Heart left ventricle (tissue), 16 donors: ENCODE measurements at regions of chr11 and their contacts with region 1.

Region 1: GRCh38 chr11:68121067-68121899 is at the start of gene CHKA:
- DNase-seq: peak; percentile 94 to 97 (median 95)
- ATAC-seq: peak; percentile 85 to 97 (median 95)
- H3K4me3 ChIP-seq: peak within 1 kb of the TSS; percentile 38 to 87 (median 76)
- H3K27ac ChIP-seq: peak within 1 kb of the TSS; percentile 91 to 100 (median 99)
- H3K4me1 ChIP-seq: peaks cover 0 to 54% (median 39%) of the 10 kb centered on the region in 12 donors
- H3K27me3 ChIP-seq: no peaks in the 10 kb centered on the region
- CTCF ChIP-seq: peak in 2 of 12 donors; percentile 15 to 24
- POLR2A ChIP-seq: peak; percentile 65 to 83
- total RNA-seq, gene CHKA: 6.1 to 15.0 (median 8.2) TPM

Region 2: GRCh38 chr11:68030318-68031138 is 90.8 kb before region 1 on chr11 and contains the start of gene NDUFS8:
- intact Hi-C with region 1: loop called in 4 of 10 experiments (anchors 5 to 10 kb)
- DNase-seq: peak; percentile 95 to 98 (median 97)
- ATAC-seq: peak; percentile 90 to 96 (median 94)
- H3K4me3 ChIP-seq: peak within 1 kb of the TSS; percentile 63 to 94 (median 85)
- H3K27ac ChIP-seq: peak within 1 kb of the TSS; percentile 85 to 98 (median 93)
- H3K4me1 ChIP-seq: peaks cover 0 to 46% (median 30%) of the 10 kb centered on the region in 12 donors
- H3K27me3 ChIP-seq: no peaks in the 10 kb centered on the region
- CTCF ChIP-seq: no peak
- POLR2A ChIP-seq: peak in 1 of 2 donors; percentile 71
- total RNA-seq, gene NDUFS8: 262 to 948 (median 365) TPM

Region 3: DNA sequence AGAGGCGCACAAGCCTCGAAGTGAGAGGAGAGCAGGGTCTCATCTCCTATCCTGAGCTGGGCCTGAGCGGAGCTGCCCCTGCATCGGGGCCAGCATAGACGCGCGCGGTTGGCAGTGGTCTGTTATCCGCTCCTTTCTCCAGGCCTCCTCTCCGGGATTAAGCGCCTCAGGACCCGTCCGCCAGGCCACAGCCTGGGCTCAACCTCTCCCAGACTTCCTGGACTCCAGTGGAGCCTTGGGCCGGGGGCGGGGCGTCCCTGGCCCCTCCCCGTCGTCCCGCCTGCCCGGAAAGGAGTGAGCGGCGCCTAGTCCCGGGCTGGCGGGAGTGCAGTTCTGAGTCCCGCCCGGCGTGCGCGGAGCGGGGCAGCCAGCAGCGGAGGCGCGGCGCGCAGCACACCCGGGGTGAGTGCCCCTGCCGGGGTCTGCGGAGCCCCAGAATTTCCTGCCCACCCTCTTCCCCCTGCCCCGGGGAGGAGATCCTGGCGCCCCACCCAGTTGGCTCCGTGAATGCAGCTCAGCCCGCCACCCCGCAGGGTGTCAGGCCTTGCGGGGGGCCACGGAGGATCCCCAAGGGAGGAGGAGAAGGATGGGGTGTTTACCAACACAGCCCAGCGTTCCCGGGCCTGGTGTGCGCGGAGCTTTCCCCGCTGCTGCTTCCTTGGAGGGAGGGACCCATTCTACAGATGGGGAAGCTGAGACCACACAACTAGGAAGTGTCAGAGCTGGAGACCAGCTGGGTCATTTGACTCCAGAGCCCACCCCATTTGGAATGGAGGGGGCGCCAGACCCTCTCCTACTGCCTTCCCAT is 82.4 kb before region 1 on chr11 and contains the start of gene TCIRG1:
- intact Hi-C with region 1: loop called in 5 of 10 experiments (anchors 2 to 10 kb)
- DNase-seq: peak; percentile 88 to 94 (median 91)
- ATAC-seq: peak; percentile 67 to 88 (median 82)
- H3K4me3 ChIP-seq: peak within 1 kb of the TSS; percentile 52 to 95 (median 81)
- H3K27ac ChIP-seq: peak within 1 kb of the TSS; percentile 74 to 96 (median 90)
- H3K4me1 ChIP-seq: peaks cover 11 to 58% (median 41%) of the 10 kb centered on the region in 12 donors
- H3K27me3 ChIP-seq: no peaks in the 10 kb centered on the region
- CTCF ChIP-seq: no peak
- POLR2A ChIP-seq: peak; percentile 73 to 98
- total RNA-seq, gene TCIRG1: 10.2 to 88.7 (median 20.3) TPM

Region 4: GRCh38 chr11:68173926-68174325 is 52.6 kb after region 1 on chr11:
- intact Hi-C with region 1: loop called in 1 of 10 experiments (anchors 10 kb)
- DNase-seq: no peak
- ATAC-seq: no peak
- H3K4me3 ChIP-seq: no peak overlapping the region
- H3K27ac ChIP-seq: no peak overlapping the region
- H3K4me1 ChIP-seq: no peaks in the 10 kb centered on the region
- H3K27me3 ChIP-seq: no peaks in the 10 kb centered on the region
- CTCF ChIP-seq: no peak
- POLR2A ChIP-seq: no peak

Region 5: DNA sequence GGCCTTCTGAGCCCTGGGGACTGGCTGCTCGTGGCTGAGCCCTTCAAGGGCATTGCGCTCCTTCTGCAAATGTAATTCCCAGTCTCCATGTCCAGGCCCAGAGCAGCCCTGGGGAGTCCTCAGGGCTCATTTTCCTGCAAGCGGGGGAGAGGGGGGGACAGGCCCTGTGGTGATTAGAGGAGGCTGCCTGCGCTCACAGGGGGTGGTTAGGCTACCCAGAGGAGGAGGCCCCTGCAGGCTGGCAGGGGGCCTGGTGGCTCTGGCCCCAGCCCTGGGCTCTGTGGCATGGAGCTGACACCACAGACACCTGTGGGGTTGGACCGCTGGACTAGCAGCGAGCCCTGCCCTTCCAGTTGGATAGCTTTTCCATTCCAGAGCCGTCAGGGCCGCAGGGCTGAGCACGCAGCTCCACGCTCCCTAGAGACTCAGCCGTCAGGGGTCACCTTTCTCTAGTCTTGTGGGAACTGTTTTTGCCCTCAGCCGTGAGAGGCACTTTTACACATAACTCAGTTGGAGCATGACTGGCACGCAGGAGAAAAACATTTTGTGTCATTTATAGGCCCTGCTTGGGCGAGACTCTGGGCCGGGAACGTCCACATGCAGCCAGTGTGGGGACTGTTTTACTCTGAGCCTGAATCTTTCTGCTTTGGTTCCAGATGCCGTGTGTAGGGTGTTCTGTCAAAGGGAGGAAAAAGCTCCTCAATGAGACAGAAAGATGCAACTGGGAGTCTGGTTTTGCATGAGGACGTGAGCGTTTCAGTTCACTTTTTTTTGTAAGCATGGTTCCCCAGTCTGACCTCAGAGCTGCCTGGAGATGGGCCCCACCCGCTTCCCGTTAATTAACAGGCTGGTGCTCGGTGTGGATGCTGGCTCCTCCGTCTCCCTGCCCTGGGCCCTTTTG is 249.2 kb after region 1 on chr11:
- intact Hi-C with region 1: no loop called
- DNase-seq: peak in 3 of 5 donors; percentile 46 to 75 (median 69)
- ATAC-seq: peak; percentile 35 to 71 (median 48)
- H3K4me3 ChIP-seq: no peak overlapping the region
- H3K27ac ChIP-seq: peak overlapping the region; percentile 61 to 92 (median 84)
- H3K4me1 ChIP-seq: peaks cover 21 to 61% (median 55%) of the 10 kb centered on the region in 12 donors
- H3K27me3 ChIP-seq: no peaks in the 10 kb centered on the region
- CTCF ChIP-seq: no peak
- POLR2A ChIP-seq: peak in 1 of 2 donors; percentile 17